H1 (cell line): ENCODE measurements at regions of chr1 and their contacts with region 1.

Region 1: GRCh38 chr1:50368179-50369012 is 54.8 kb downstream of the DMRTA2 start:
- DNase-seq: peak in 1 of 2 experiments; percentile 92
- H3K4me3 ChIP-seq: 0 out of 8 replicates have a peak overlapping the region, but pooled peaks of 1 of the 4 experiments have one; percentile 28
- H3K27ac ChIP-seq: no peak overlapping the region
- H3K4me1 ChIP-seq: no peaks in the 10 kb centered on the region
- H3K27me3 ChIP-seq: peaks cover 3 to 18% (median 12%) of the 10 kb centered on the region in 4 experiments; a peak in 5 of 7 replicates
- CTCF ChIP-seq: peak; percentile 58 to 81 (median 62)
- EP300 ChIP-seq: no peak
- POLR2A ChIP-seq: no peak
- RAD21 ChIP-seq: peak; percentile 94

Region 2: DNA sequence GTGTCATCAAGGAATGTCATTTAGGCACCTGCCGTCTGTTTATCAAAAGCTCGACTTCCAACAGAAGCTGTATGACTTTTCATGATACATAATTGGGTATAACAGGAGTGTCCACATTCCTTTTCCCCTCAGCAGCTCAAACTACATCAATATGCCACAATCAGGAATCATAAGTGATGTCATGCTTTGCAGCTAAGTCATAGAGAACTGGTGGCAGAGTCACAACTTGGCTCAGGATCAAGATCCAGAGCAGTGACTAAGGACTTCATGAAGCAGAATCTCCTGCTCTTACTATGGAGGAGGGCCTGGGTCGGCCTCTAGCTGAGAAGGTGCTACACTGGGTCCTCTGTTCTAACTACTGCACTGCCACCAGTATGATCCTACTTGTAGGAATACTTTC is 308.1 kb before region 1 on chr1:
- CTCF ChIA-PET with region 1: no interaction called
- POLR2A ChIA-PET with region 1: no interaction called
- DNase-seq: no peak
- H3K4me3 ChIP-seq: no peak overlapping the region
- H3K27ac ChIP-seq: no peak overlapping the region
- H3K4me1 ChIP-seq: no peaks in the 10 kb centered on the region
- H3K27me3 ChIP-seq: no peaks in the 10 kb centered on the region
- CTCF ChIP-seq: no peak
- EP300 ChIP-seq: no peak
- POLR2A ChIP-seq: no peak
- RAD21 ChIP-seq: no peak

Region 3: GRCh38 chr1:50378770-50379169 is 10.4 kb after region 1 on chr1:
- CTCF ChIA-PET with region 1: interaction called, 10 read pairs
- POLR2A ChIA-PET with region 1: no interaction called
- DNase-seq: no peak
- H3K4me3 ChIP-seq: no peak overlapping the region
- H3K27ac ChIP-seq: no peak overlapping the region
- H3K4me1 ChIP-seq: no peaks in the 10 kb centered on the region
- H3K27me3 ChIP-seq: no peaks in the 10 kb centered on the region
- CTCF ChIP-seq: no peak
- EP300 ChIP-seq: no peak
- POLR2A ChIP-seq: no peak
- RAD21 ChIP-seq: no peak

Region 4: DNA sequence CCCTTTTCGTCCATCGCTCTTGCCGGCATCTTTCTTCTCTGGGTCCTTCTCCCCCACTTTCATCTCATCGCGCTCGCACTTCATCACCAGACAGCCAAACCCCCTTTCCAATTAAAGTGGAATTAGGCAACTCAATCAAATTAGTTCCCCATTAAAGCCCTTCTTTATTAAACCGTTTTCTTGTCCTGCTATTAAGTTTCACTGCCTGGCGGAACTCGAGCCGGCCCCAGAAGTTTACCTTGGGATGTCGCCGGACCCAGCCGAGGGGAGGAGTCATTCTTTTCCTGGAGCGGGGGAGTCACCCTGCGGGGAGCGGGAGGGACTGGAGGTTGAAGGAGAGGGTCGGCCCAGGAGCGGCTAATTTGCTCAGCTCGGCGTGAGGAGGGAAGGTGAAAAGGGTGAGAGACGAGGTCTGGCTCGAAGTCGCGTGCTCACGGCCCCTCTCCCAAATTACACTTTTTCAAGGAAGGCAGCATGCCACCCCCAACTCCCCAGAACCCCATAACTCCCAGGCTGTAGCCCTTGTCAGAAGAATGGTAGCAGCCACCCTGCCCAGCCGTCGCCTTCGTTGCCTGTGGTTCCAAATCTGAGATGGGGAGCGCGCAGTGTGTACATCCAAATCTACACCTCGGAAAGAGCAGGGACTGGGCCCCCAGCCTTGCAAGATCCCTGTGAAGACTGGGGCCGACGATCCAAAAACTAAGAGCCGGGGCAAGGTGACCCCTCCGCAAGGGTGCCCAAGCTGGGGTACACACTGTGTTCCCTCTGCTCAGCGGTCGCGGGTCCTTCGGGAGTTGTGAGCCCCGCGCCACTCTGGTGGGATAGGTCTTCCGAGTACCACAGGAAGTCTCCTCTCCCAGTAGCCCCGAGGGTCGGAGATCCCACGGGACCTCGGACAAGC is 48.4 kb after region 1 on chr1:
- CTCF ChIA-PET with region 1: interaction called, 32 read pairs
- POLR2A ChIA-PET with region 1: no interaction called
- DNase-seq: peak in 1 of 2 experiments; percentile 81
- H3K4me3 ChIP-seq: peak overlapping the region; percentile 19 to 58 (median 39); a peak in 6 of 8 replicates
- H3K27ac ChIP-seq: no peak overlapping the region
- H3K4me1 ChIP-seq: peaks cover 0 to 30% (median 17%) of the 10 kb centered on the region in 4 experiments; a peak in 5 of 7 replicates
- H3K27me3 ChIP-seq: peaks cover 89 to 97% (median 91%) of the 10 kb centered on the region in 4 experiments
- CTCF ChIP-seq: no peak
- EP300 ChIP-seq: no peak
- POLR2A ChIP-seq: no peak
- RAD21 ChIP-seq: no peak

Region 5: GRCh38 chr1:50422946-50423669 is 54.7 kb after region 1 on chr1 and contains the start of gene DMRTA2:
- CTCF ChIA-PET with region 1: interaction called, 32 read pairs
- POLR2A ChIA-PET with region 1: no interaction called
- DNase-seq: peak in 1 of 2 experiments; percentile 87
- H3K4me3 ChIP-seq: peak within 1 kb of the TSS; percentile 20 to 56 (median 34)
- H3K27ac ChIP-seq: no peak within 1 kb of the TSS
- H3K4me1 ChIP-seq: peaks cover 6 to 32% (median 18%) of the 10 kb centered on the region in 4 experiments; a peak in 6 of 7 replicates
- H3K27me3 ChIP-seq: peaks cover 99 to 100% (median 99%) of the 10 kb centered on the region in 4 experiments
- CTCF ChIP-seq: no peak
- EP300 ChIP-seq: no peak
- POLR2A ChIP-seq: no peak
- RAD21 ChIP-seq: no peak
- total RNA-seq, gene DMRTA2: not detected in 2 replicates